Activated T-helper 1 cell treated with anti-CD3 and anti-CD28 coated beads, Interleukin-12 subunit alpha, Interleukin-12 subunit beta, Interleukin-2, Interleukin-4 antibody, amounts not matched to agents 30 ng/mL and 10 ng/mL and 1 ng/mL, durations not matched to agents 14 hours and 24 hours and 36 hours (primary cell): ENCODE measurements at regions of chr3 and their contacts with region 1.

Region 1: GRCh38 chr3:122793568-122794416 is at the start of gene HSPBAP1:
- DNase-seq: peak; percentile 86
- H3K4me3 Mint-ChIP-seq: peak within 1 kb of the TSS; percentile 89
- H3K27ac Mint-ChIP-seq: peak within 1 kb of the TSS; percentile 79
- H3K4me1 Mint-ChIP-seq: peaks cover 39% of the 10 kb centered on the region
- H3K27me3 Mint-ChIP-seq: no peaks in the 10 kb centered on the region
- total RNA-seq, gene HSPBAP1: 8.1 and 8.9 TPM in 2 replicates

Region 2: DNA sequence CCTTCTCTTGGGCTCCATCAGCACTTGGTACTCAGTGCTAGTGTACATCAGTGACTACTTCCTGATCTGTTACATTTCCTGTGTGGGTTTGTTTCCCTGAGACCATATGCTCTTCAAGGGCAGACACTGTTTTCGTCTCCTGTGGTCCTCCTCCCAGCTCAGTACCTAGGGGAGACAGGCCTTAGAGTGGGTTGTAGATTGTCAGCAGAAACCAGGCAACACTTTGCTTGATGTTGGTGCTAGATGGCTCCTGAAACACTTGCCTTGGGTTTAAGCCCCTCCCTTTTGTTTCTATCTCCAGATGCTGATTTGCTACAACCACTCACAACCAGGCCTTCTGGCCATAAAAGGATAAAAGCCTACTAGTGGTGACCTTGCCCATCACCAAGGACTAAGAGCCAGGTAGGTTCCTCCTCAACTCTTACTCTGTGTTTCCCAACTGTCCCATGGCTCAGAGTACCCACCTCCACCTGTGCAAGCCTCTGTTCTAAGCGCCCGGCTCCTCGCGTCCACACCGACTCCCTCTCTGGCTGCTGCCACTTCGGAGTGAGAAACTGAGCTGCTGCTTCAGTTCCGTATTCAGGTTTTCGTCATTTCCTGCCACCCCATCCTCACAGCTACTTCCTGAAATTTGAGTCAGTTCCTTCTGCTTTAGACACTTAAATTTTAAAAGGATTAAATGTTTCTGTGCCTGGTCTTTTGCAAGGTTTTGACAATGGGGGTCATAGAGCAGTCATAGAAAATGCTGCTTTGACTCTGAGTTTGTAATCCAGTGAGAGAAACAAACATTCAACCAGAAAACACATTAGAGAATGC is 1133.2 kb before region 1 on chr3 and contains the start of gene HCLS1:
- intact Hi-C with region 1: loop called (anchors 5 kb)
- DNase-seq: peak; percentile 73
- H3K4me3 Mint-ChIP-seq: peak within 1 kb of the TSS; percentile 95
- H3K27ac Mint-ChIP-seq: peak within 1 kb of the TSS; percentile 99
- H3K4me1 Mint-ChIP-seq: peaks cover 57% of the 10 kb centered on the region
- H3K27me3 Mint-ChIP-seq: no peaks in the 10 kb centered on the region
- total RNA-seq, gene HCLS1: 234 and 235 TPM in 2 replicates

Region 3: DNA sequence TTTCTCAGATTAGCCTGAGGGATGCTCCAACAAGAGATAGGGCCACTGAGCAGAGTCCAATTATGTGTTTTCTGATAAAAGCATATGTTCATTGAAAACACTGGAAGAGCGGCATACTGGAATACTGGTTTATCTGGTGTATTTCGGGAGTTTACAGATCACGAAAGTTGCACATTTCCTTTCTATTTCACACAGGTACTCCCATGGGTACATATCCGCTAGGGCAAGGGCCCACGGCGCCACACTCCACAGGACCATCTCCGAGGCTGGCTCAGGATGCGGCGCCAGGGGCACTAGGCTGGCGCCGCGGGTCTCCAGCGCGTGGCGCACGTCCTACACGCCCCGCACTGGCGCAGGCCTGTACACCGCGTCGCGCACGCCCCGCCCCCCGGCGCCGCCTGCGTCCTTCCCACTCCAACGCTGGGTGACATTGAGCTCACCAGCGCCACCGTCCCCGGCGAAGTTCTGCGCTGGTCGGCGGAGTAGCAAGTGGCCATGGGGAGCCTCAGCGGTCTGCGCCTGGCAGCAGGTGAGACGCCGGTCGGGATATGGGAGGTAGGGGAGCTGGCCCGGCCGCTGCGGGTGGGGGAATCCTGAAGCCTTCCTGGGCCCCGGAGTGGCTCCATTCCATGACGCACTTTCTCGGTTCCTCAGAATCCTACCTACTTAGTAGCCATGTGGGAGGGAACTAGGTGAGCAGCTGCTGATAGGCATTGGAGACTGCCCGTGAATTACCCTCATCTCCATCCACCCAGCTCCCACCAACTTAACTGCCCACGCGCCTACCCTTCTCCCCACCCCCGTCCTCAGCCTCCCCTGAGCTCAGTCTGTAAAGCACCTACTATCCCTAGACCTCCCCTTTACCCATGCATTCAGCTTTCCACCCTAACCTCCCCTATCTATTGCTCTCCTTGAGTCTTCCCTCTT is 409.8 kb before region 1 on chr3 and contains the start of gene FAM162A:
- intact Hi-C with region 1: loop called (anchors 2 kb)
- DNase-seq: peak; percentile 93
- H3K4me3 Mint-ChIP-seq: peak within 1 kb of the TSS; percentile 96
- H3K27ac Mint-ChIP-seq: peak within 1 kb of the TSS; percentile 90
- H3K4me1 Mint-ChIP-seq: peaks cover 81% of the 10 kb centered on the region
- H3K27me3 Mint-ChIP-seq: no peaks in the 10 kb centered on the region
- total RNA-seq, gene FAM162A: 63.7 and 70.0 TPM in 2 replicates

Region 4: DNA sequence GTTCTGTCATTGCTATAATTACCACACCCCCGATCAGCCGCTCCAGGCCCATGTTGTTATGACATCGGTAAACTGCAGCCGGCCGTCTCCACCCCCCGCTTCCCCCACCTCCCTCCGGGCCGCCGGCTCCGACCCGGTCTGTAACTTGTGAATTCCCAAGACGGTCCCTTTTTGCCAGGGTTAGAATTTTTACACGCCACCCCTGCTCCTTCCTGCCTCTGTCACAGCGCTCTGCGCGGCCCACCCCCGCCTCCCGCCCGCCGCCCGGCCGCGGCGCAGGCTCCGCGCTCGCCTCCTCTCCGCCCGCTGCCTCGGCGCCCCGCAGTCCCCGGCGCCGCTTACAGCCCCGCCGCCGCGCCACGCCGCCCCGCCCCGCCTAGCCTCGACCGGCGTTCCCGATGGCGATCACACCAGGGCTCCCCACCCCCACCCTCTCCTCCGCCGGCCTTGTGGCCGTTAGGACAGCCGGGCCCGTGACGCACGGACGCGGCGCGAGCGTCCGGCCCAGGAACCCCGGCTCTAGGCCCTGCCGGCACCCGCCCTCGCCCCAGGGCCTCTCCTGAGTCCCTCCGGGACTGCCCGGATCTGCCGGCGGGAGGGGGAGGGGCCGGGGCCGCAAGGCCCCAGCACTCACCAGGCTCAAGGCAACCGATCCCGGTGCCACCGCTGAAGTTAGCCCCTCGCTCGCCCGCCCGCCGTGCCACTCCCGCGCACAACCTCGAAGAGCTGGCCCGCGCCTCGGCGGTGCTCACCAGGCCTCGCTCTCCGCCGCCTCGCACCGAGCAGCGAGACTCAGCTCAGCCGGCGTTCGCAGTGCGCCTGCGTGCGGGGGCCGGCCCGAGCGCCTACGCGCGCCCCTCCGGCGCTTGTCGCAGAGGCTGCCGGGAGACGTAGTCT is 279.4 kb before region 1 on chr3 and contains the start of gene KPNA1:
- intact Hi-C with region 1: loop called (anchors 10 kb)
- DNase-seq: peak; percentile 85
- H3K4me3 Mint-ChIP-seq: peak within 1 kb of the TSS; percentile 90
- H3K27ac Mint-ChIP-seq: peak within 1 kb of the TSS; percentile 92
- H3K4me1 Mint-ChIP-seq: peaks cover 46% of the 10 kb centered on the region
- H3K27me3 Mint-ChIP-seq: peaks cover 4% of the 10 kb centered on the region
- total RNA-seq, gene KPNA1: 81.7 and 88.2 TPM in 2 replicates

Region 5: GRCh38 chr3:122679085-122679881 is 114.5 kb before region 1 on chr3:
- intact Hi-C with region 1: loop called (anchors 5 kb)
- DNase-seq: peak; percentile 77
- H3K4me3 Mint-ChIP-seq: peak overlapping the region; percentile 95
- H3K27ac Mint-ChIP-seq: peak overlapping the region; percentile 97
- H3K4me1 Mint-ChIP-seq: peaks cover 54% of the 10 kb centered on the region
- H3K27me3 Mint-ChIP-seq: no peaks in the 10 kb centered on the region

Region 6: DNA sequence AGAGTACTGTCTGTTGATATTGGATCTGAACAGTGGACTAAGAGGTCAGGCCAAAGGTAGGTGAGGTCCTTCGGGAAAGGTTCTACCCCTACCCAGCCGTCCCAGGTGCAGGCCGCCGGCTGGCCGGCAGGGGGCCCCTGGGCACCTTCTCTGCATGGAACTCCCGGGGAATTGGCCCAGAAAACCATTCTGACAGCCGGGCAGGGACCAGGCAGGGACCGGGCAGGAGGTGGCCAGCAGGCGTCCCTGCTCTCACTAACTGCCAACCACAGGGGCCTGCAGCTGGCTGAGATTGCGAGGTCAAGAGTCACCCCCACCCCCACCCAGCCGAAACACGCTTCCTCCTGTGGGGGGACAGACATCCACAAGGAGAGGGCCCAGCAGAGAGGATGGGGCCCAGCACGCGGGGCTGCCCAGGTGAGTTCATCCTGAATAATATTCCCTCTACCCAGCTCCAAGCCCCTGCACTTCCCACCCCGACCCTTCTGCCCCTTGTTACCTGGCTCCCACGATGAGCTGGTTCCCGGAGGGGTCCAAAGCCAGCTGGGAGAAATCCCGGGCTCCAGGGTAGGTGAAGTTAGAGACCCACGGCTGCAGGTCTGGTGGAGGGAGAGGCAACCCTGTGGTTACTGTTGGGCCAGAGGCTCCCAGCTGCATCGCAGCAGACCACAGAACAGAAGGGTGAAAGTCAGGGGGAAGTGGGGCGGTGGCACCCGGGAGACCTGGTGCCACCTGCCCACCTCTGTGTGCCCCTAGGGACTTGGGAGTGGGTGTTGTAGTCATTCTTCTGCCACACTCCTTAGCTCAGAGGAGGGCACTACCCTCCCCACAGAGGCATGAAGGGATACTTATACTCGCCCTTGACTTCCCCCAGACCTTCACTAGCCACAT is 149.4 kb after region 1 on chr3:
- intact Hi-C with region 1: no loop called
- DNase-seq: no peak
- H3K4me3 Mint-ChIP-seq: no peak overlapping the region
- H3K27ac Mint-ChIP-seq: no peak overlapping the region
- H3K4me1 Mint-ChIP-seq: no peaks in the 10 kb centered on the region
- H3K27me3 Mint-ChIP-seq: peaks cover 14% of the 10 kb centered on the region

Region 7: GRCh38 chr3:123066896-123067688 is 273.3 kb after region 1 on chr3 and contains the start of gene PDIA5:
- intact Hi-C with region 1: loop called (anchors 2 kb)
- DNase-seq: peak; percentile 61
- H3K4me3 Mint-ChIP-seq: peak within 1 kb of the TSS; percentile 91
- H3K27ac Mint-ChIP-seq: peak within 1 kb of the TSS; percentile 52
- H3K4me1 Mint-ChIP-seq: peaks cover 60% of the 10 kb centered on the region
- H3K27me3 Mint-ChIP-seq: no peaks in the 10 kb centered on the region
- total RNA-seq, gene PDIA5: 28.9 and 31.1 TPM in 2 replicates

Region 8: DNA sequence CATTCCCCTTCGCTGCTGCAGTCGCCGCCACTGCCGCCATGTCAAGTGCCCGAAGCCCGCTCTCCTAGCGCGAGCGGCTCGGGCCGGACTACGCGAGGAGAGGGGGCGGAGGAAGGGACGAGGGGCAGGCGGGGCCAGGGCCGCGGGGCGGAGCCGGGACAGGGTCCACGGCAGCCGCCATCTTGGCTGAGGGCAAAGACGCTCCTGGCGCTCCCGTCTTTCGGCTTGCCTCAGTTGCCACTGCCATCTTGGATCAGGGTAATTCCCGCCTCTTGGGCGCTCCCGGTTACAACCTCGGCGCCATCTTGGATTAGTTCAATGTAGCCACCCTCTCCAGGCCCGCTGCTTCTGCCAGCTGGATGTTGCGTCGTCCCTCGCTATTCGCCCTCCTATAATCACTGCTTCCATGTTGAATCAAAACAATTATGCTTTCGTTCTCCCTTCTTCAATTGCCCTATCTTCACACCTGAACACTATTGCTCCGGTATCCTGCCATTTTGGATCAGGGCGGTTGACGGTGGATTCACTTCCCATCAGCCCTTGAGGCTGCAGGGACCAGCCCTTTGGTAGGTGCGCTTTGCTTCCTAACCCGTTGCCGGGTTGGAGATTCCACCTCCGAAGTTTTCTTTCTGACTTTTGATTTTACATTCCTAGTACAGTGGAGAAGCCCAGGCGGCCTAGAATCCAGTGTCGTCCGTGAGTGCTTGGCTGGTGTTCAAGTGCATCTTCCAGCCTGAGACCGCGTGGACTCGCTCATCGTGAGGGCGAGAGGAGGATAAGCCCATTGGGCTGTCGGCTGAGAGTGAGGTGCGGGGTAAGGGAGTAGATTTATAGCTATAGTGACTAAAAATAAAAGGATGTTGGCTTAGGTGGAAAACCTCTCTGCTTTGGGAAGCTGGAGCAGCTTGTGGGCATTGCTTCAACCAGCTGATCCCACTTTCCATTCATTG is 791.5 kb after region 1 on chr3 and contains the start of gene HACD2:
- intact Hi-C with region 1: loop called (anchors 1 kb)
- DNase-seq: peak; percentile 93
- H3K4me3 Mint-ChIP-seq: no peak within 1 kb of the TSS
- H3K27ac Mint-ChIP-seq: peak within 1 kb of the TSS; percentile 63
- H3K4me1 Mint-ChIP-seq: peaks cover 23% of the 10 kb centered on the region
- H3K27me3 Mint-ChIP-seq: no peaks in the 10 kb centered on the region
- total RNA-seq, gene HACD2: 31.5 TPM in 2 replicates